Psoas muscle (tissue), 8 donors: ENCODE measurements at regions of chr14 and their contacts with region 1.

Region 1: GRCh38 chr14:73472185-73473114 is 14.1 kb upstream of the NUMB start:
- DNase-seq: no peak
- ATAC-seq: peak; percentile 81 to 96 (median 85)
- H3K4me3 ChIP-seq: no peak overlapping the region
- H3K27ac ChIP-seq: no peak overlapping the region
- H3K4me1 ChIP-seq: no peaks in the 10 kb centered on the region
- H3K27me3 ChIP-seq: no peaks in the 10 kb centered on the region
- CTCF ChIP-seq: peak; percentile 80

Region 2: GRCh38 chr14:73295198-73295796 is 177.2 kb before region 1 on chr14:
- intact Hi-C with region 1: loop called (anchors 2 kb)
- DNase-seq: no peak
- ATAC-seq: no peak
- H3K4me3 ChIP-seq: no peak overlapping the region
- H3K27ac ChIP-seq: no peak overlapping the region
- H3K4me1 ChIP-seq: no peaks in the 10 kb centered on the region
- H3K27me3 ChIP-seq: no peaks in the 10 kb centered on the region
- CTCF ChIP-seq: peak; percentile 67

Region 3: DNA sequence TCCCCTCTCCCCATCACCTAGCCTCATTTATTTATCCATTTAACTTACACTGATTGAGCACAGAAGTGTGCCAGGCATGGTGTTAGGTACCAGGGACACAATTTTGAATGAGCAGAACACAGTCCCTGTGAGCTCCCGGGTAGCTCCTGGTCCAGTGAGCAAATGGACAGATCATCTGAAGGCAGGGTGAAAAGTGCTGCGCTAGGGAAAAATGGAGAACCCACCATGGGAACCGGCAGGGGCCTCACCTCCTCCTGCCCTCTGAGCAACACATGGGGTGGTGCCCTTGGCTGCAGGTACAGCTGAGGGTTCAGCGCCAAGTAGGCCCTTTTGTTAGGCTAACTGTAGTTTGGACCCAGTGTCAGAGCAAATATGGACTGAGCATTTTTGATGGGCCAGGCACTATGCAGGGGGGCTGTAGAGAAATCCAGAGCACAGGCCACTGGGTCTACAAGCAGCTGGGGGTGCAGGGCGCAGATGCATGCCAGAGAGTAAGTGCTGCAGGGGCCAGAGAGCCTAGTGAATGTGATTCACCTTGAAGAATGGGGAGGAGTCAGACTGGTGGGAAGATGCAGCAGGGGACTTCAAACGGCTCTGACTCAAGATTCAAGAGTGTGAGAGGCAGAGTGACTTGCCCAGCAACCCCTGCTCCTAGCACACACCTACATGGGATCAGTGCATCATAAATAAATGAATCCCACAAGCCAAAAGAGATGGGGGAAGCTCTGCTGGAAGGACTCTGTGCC is 1111.4 kb after region 1 on chr14:
- intact Hi-C with region 1: no loop called
- DNase-seq: peak in 1 of 2 donors; percentile 39
- ATAC-seq: no peak
- H3K4me3 ChIP-seq: no peak overlapping the region
- H3K27ac ChIP-seq: no peak overlapping the region
- H3K4me1 ChIP-seq: peaks cover 3% of the 10 kb centered on the region
- H3K27me3 ChIP-seq: no peaks in the 10 kb centered on the region
- CTCF ChIP-seq: no peak